ENCODE measurements at regions of chr7 and their contacts with region 1.

Region 1: DNA sequence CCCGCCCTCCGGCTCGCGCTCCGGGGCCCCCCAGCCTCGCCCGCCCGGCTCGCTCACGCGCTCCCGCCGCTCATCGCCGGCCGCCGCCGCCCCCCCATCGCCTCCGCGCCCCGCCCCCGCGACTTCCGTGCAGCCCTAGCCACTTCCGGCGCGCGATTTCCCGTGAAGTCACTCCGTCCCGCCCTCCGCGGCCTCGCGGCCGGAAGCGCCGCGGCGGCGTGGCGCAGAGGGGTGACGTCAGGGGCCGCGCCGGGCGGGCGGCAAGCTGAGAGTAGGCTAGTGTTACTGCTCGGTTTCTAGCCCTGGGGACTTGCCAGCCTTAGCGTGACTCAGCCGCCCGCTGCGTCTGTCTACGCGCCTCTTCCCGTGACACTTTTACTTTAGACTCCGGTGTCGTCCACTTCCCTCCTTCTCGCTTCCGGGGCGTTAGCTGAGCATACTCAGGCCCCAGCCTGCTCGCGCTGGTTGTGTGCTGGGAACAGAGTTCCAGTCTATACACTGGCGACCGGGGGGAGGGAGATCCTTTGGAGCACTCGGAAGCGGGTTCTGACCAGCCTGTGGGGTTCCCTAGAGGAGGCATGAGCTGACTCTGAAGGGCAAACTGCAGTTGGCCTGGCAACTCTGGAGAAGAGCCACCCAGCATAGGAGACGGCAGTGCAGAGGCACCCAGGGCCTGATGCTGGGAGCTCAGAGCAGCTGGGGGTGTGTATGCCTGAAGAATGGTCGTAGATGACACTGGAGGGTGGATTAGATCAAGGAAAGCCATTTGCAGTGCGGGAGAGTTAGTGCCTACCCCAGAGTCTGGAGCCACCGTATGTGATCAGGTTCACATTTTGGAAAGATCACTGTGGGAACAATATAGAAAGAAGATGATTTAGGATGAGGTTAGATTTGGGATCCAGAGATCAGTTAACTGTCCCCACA is at the start of gene PURB:
- H3K4me3 ChIP-seq: peak within 1 kb of the TSS; percentile 93
- H3K27ac ChIP-seq: peak within 1 kb of the TSS; percentile 87
- H3K4me1 ChIP-seq: peaks cover 6% of the 10 kb centered on the region
- CTCF ChIP-seq: no peak

Region 2: GRCh38 chr7:44606450-44607254 is 279.0 kb before region 1 on chr7 and contains the start of gene OGDH:
- CTCF ChIA-PET with region 1: no interaction called
- POLR2A ChIA-PET with region 1: interaction called, 13 read pairs
- H3K4me3 ChIP-seq: peak within 1 kb of the TSS; percentile 98
- H3K27ac ChIP-seq: peak within 1 kb of the TSS; percentile 86
- H3K4me1 ChIP-seq: no peaks in the 10 kb centered on the region
- CTCF ChIP-seq: no peak

Region 3: GRCh38 chr7:44847508-44847920 is 38.1 kb before region 1 on chr7:
- CTCF ChIA-PET with region 1: interaction called, 6 read pairs
- POLR2A ChIA-PET with region 1: interaction called, 33 read pairs
- H3K4me3 ChIP-seq: peak overlapping the region; percentile 77
- H3K27ac ChIP-seq: peak overlapping the region; percentile 88
- H3K4me1 ChIP-seq: peaks cover 12% of the 10 kb centered on the region
- CTCF ChIP-seq: peak; percentile 95

Region 4: GRCh38 chr7:44858161-44858560 is 27.5 kb before region 1 on chr7:
- CTCF ChIA-PET with region 1: interaction called, 22 read pairs
- POLR2A ChIA-PET with region 1: interaction called, 5 read pairs
- H3K4me3 ChIP-seq: no peak overlapping the region
- H3K27ac ChIP-seq: no peak overlapping the region
- H3K4me1 ChIP-seq: no peaks in the 10 kb centered on the region
- CTCF ChIP-seq: no peak

Region 5: GRCh38 chr7:44867073-44867995 is 18.3 kb before region 1 on chr7:
- CTCF ChIA-PET with region 1: interaction called, 5 read pairs
- POLR2A ChIA-PET with region 1: interaction called, 16 read pairs
- H3K4me3 ChIP-seq: no peak overlapping the region
- H3K27ac ChIP-seq: no peak overlapping the region
- H3K4me1 ChIP-seq: no peaks in the 10 kb centered on the region
- CTCF ChIP-seq: no peak

Region 6: DNA sequence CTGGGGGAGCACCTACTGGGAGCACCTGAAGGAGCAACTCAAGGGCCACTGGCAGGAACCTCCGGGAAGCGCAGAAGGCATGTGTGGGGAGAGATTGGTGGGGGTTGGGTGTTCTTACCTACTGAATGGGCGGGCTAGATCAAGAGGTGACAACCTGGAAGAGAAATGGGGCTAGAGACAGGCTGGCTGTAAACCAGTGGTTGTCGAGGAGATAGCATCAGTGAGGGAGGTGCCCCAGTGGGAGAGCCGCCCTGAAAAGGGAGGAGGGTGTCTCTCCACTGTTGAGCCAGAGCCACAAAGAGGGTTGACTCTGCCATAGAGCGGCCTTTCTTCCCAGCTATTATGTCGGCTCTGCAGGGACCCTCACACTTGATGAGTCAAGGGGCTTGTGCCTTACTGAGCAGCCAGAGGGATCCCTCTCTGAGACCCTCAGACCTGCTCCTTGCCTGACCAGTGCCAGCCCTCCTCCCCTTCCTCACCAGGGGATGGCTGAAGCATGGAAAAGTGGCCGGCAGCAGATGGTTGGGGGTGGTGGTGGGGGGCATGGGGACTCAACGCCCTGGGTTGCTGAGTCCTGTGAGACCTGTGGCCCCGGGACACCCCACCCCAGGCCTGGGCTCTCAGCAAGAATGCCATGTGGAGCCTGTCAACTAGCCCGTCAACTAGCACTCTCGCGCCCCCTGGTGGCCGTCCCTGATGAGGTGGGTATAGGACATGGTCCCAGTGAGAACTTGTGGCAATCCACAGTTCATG is 36.1 kb after region 1 on chr7:
- CTCF ChIA-PET with region 1: interaction called, 10 read pairs
- POLR2A ChIA-PET with region 1: no interaction called
- H3K4me3 ChIP-seq: no peak overlapping the region
- H3K27ac ChIP-seq: no peak overlapping the region
- H3K4me1 ChIP-seq: no peaks in the 10 kb centered on the region
- CTCF ChIP-seq: peak; percentile 43

Measured in HEK293 (cell line).